ENCODE measurements at regions of chr10 and their contacts with region 1.

Region 1: DNA sequence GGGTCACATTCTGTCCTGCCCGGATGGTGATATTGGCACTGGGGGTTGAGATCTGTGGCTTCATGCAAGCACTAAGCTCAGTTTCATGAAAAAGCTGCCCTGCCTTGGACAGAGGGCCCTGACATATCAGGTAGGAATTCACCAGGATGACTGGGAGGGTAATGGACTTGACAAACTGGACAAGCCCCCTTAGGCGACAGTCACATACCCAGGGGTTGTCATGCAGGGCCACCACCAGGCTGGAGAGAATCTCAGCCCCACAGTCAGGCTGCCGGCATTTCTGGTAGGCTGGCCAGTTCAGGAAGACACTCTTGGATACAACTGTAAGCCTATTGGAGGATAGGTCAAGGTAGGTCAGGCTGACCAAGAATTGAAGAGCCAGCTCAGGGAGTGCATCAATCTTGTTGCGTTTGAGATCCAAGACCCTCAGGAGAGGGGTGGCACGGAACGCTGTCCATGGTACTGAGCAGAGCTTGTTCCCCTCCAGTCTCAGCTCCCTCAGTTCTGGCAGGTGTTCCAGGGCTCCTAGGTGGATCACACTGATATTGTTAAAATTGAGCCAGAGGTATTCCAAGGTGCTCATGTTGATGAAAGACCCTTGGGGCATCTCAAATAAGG is 824 bp downstream of the LRIT2 start:
- DNase-seq: peak in 1 of 2 experiments; percentile 67
- H3K4me3 ChIP-seq: no peak overlapping the region
- H3K27ac ChIP-seq: no peak overlapping the region
- H3K4me1 ChIP-seq: no peaks in the 10 kb centered on the region
- H3K27me3 ChIP-seq: 0 out of 7 replicates have a peak, but pooled peaks cover 0 to 2% (median 0%) of the 10 kb centered on the region in 4 experiments
- CTCF ChIP-seq: no peak
- EP300 ChIP-seq: no peak
- POLR2A ChIP-seq: no peak
- RAD21 ChIP-seq: no peak

Region 2: DNA sequence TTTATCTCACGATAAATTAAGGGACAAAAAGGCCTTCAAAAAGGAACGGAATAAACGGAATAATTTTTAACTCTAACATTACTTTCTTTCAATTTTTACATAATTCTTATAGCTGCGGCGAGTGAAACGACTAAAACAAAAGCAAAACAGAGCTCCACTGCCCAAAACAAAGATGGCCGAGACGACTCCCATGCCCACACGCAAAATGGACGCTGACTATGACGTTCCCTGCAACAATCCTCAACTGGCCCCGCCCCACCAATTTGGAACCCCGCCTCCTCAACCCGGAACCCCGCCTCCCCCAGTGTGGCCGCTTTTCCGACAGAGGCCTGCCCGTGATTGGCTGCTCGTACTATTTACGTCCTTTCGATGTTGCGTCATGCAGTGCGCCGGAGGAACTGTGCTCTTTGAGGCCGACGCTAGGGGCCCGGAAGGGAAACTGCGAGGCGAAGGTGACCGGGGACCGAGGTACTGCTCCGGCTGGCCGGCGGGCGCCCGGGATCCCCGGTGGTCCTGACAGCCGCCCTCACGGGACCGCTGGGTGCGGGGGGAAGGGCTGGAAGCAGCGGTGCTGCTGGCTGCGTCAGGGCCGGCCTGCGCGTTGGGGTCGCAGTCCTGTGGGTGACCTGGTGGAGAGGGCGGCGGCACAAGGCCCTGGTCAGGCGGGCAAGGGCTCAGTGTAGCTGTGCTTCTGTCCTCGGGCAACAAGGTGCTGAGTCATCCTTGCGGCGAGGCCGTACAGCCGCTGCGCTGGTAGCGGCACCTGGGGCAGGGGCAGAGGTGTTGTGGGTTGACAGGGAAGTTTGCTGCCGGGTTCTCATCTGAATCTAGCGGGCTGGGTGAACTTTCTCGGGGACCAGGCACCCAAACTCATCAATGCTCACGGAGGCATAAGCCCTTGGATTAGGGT is 85.1 kb before region 1 on chr10 and contains the start of gene GHITM:
- CTCF ChIA-PET with region 1: no interaction called
- POLR2A ChIA-PET with region 1: no interaction called
- DNase-seq: peak; percentile 97 to 100
- H3K4me3 ChIP-seq: peak within 1 kb of the TSS; percentile 88 to 97 (median 96)
- H3K27ac ChIP-seq: peak within 1 kb of the TSS; percentile 83
- H3K4me1 ChIP-seq: peaks cover 3 to 9% (median 4%) of the 10 kb centered on the region in 4 experiments; a peak in 6 of 7 replicates
- H3K27me3 ChIP-seq: no peaks in the 10 kb centered on the region
- CTCF ChIP-seq: peak; percentile 9 to 38 (median 37); a peak in 2 of 4 replicates
- EP300 ChIP-seq: no peak
- POLR2A ChIP-seq: peak; percentile 77 to 80
- RAD21 ChIP-seq: no peak
- total RNA-seq, gene GHITM: 87.8 and 97.0 TPM in 2 replicates

Region 3: GRCh38 chr10:84237199-84238051 is 12.9 kb after region 1 on chr10:
- CTCF ChIA-PET with region 1: interaction called, 13 read pairs
- POLR2A ChIA-PET with region 1: interaction called, 3 read pairs
- DNase-seq: peak; percentile 38 to 94
- H3K4me3 ChIP-seq: no peak overlapping the region; a peak in 1 of 8 replicates
- H3K27ac ChIP-seq: no peak overlapping the region
- H3K4me1 ChIP-seq: peaks cover 0 to 2% (median 0%) of the 10 kb centered on the region in 4 experiments; a peak in 3 of 7 replicates
- H3K27me3 ChIP-seq: peaks cover 0 to 10% (median 7%) of the 10 kb centered on the region in 4 experiments; a peak in 5 of 7 replicates
- CTCF ChIP-seq: peak; percentile 79 to 90 (median 83)
- EP300 ChIP-seq: no peak
- POLR2A ChIP-seq: no peak
- RAD21 ChIP-seq: peak; percentile 37 to 56; a peak in 3 of 4 replicates

Measured in H1 (cell line).